Right cardiac atrium (tissue), 5 donors: ENCODE measurements at regions of chr5 and their contacts with region 1.

Region 1: GRCh38 chr5:42949348-42950115 is 90.6 kb downstream of the ANXA2R start:
- DNase-seq: peak; percentile 57 to 80 (median 75)
- ATAC-seq: peak; percentile 66 to 74
- H3K4me3 ChIP-seq: peak overlapping the region; percentile 55
- H3K27ac ChIP-seq: peak overlapping the region; percentile 84
- H3K4me1 ChIP-seq: no peaks in the 10 kb centered on the region
- H3K27me3 ChIP-seq: no peaks in the 10 kb centered on the region

Region 2: GRCh38 chr5:42994246-42995151 is 45.0 kb after region 1 on chr5:
- intact Hi-C with region 1: loop called in 1 of 4 experiments (anchors 5 kb)
- DNase-seq: peak; percentile 87 to 93 (median 92)
- ATAC-seq: peak; percentile 77 to 79
- H3K4me3 ChIP-seq: peak overlapping the region; percentile 51
- H3K27ac ChIP-seq: peak overlapping the region; percentile 94
- H3K4me1 ChIP-seq: no peaks in the 10 kb centered on the region
- H3K27me3 ChIP-seq: no peaks in the 10 kb centered on the region